Activated T-helper 2 cell treated with anti-CD3 and anti-CD28 coated beads, Interferon-gamma antibody, Interleukin-2, Interleukin-4, amounts not matched to agents 10 μg/mL and 5 μg/mL and 100 μg/mL, durations not matched to agents 14 hours and 24 hours and 36 hours (primary cell): ENCODE measurements at regions of chr11 and their contacts with region 1.

Region 1: GRCh38 chr11:95556342-95557163 is 233.0 kb downstream of the FAM76B start:
- DNase-seq: no peak
- H3K4me3 Mint-ChIP-seq: no peak overlapping the region
- H3K27ac Mint-ChIP-seq: peak overlapping the region; percentile 91
- H3K4me1 Mint-ChIP-seq: peaks cover 37% of the 10 kb centered on the region
- H3K27me3 Mint-ChIP-seq: no peaks in the 10 kb centered on the region

Region 2: DNA sequence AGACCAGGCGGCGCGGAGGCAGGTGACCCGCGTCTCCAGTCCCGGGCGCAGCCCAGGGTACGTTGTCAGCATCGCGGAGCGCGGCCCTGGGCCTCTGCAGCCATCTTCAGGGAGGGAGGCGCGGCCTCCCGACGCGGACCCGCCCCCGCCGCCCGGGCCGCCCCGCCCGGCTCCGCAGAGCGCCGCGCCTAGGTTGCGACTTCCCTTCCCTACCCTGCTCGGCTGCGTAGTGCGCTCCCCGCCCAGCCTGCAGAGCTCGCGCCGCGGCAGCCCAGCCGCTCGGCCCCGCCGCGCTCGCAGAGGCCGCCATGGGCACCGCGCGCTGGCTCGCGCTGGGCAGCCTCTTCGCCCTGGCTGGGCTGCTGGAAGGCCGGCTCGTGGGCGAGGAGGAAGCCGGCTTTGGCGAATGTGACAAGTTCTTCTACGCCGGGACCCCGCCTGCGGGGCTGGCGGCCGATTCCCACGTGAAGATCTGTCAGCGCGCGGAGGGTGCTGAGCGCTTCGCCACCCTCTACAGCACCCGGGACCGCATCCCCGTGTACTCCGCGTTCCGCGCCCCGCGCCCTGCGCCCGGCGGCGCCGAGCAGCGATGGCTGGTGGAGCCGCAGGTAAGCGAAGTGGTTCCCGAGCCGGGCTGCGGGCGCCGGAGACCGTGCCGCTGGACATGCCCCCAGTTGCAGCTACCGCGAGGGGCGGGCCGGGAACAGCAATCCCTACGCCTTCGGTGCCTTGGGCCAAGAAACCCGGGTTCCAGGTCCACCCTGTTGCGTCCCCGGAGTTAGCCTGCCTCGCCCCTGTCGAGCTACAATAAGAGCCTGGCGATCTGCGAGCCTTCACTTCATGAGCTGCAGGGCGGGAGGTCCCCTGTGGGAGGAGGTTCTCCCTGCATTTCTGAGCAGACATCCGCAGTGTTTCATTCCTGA is 466.7 kb before region 1 on chr11 and contains the start of gene ENDOD1:
- intact Hi-C with region 1: loop called (anchors 5 kb)
- DNase-seq: peak; percentile 85
- H3K4me3 Mint-ChIP-seq: peak within 1 kb of the TSS; percentile 88
- H3K27ac Mint-ChIP-seq: peak within 1 kb of the TSS; percentile 95
- H3K4me1 Mint-ChIP-seq: peaks cover 66% of the 10 kb centered on the region
- H3K27me3 Mint-ChIP-seq: no peaks in the 10 kb centered on the region
- total RNA-seq, gene ENDOD1: 33.7 and 34.9 TPM in 2 replicates

Region 3: GRCh38 chr11:95352733-95353346 is 203.7 kb before region 1 on chr11:
- intact Hi-C with region 1: no loop called
- DNase-seq: no peak
- H3K4me3 Mint-ChIP-seq: no peak overlapping the region
- H3K27ac Mint-ChIP-seq: no peak overlapping the region
- H3K4me1 Mint-ChIP-seq: no peaks in the 10 kb centered on the region
- H3K27me3 Mint-ChIP-seq: peaks cover 11% of the 10 kb centered on the region

Region 4: DNA sequence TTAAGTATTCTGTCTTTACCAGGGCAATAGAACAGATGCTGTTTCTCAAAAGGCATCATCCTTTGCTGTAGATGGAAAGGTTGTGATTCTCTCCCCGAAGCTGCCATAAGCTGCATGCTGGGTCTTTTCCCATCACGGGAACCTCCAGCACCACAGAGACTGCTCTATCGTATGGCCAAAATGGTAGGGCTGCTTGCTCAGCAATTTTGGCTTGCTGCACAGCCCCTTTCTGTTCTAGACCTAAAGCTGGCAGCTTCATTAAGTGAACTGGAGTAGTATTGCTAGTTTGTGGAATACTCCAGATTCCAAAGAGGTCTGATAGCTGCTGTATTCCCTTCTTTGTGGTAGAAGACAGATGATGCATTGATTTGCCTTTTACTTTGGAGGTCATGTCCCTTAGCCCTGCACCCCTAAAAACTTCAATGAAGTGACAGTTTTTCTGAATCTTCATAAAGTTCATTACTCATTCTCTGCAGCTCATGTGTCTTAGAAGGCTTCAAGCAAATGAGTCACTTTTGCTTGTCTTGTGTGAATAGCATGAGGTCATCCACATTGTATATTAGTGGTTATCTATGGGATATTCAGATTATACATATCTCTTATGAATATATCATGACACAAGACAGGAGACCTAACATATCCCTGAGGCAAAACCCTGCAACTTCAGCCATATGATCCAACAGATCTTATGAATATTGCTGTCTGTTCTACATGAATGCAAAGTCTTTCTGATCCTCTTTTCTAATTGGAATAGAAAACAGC is 12.3 kb before region 1 on chr11:
- intact Hi-C with region 1: loop called (anchors 1 kb)
- DNase-seq: no peak
- H3K4me3 Mint-ChIP-seq: no peak overlapping the region
- H3K27ac Mint-ChIP-seq: no peak overlapping the region
- H3K4me1 Mint-ChIP-seq: peaks cover 4% of the 10 kb centered on the region
- H3K27me3 Mint-ChIP-seq: no peaks in the 10 kb centered on the region

Region 5: GRCh38 chr11:95584589-95584988 is 28.0 kb after region 1 on chr11:
- intact Hi-C with region 1: loop called (anchors 2 kb)
- DNase-seq: no peak
- H3K4me3 Mint-ChIP-seq: no peak overlapping the region
- H3K27ac Mint-ChIP-seq: no peak overlapping the region
- H3K4me1 Mint-ChIP-seq: peaks cover 29% of the 10 kb centered on the region
- H3K27me3 Mint-ChIP-seq: no peaks in the 10 kb centered on the region

Region 6: GRCh38 chr11:95674657-95675358 is 118.3 kb after region 1 on chr11:
- intact Hi-C with region 1: loop called (anchors 1 kb)
- DNase-seq: no peak
- H3K4me3 Mint-ChIP-seq: no peak overlapping the region
- H3K27ac Mint-ChIP-seq: peak overlapping the region; percentile 78
- H3K4me1 Mint-ChIP-seq: peaks cover 54% of the 10 kb centered on the region
- H3K27me3 Mint-ChIP-seq: no peaks in the 10 kb centered on the region

Region 7: GRCh38 chr11:95699631-95700470 is 143.3 kb after region 1 on chr11:
- intact Hi-C with region 1: loop called (anchors 1 kb)
- DNase-seq: no peak
- H3K4me3 Mint-ChIP-seq: peak overlapping the region; percentile 62
- H3K27ac Mint-ChIP-seq: peak overlapping the region; percentile 93
- H3K4me1 Mint-ChIP-seq: peaks cover 54% of the 10 kb centered on the region
- H3K27me3 Mint-ChIP-seq: no peaks in the 10 kb centered on the region

Region 8: GRCh38 chr11:95877291-95877690 is 320.7 kb after region 1 on chr11:
- intact Hi-C with region 1: no loop called
- DNase-seq: no peak
- H3K4me3 Mint-ChIP-seq: no peak overlapping the region
- H3K27ac Mint-ChIP-seq: peak overlapping the region; percentile 25
- H3K4me1 Mint-ChIP-seq: peaks cover 3% of the 10 kb centered on the region
- H3K27me3 Mint-ChIP-seq: no peaks in the 10 kb centered on the region